Mucosa of descending colon (tissue), 3 donors: ENCODE measurements at regions of chr22 and their contacts with region 1.

Region 1: DNA sequence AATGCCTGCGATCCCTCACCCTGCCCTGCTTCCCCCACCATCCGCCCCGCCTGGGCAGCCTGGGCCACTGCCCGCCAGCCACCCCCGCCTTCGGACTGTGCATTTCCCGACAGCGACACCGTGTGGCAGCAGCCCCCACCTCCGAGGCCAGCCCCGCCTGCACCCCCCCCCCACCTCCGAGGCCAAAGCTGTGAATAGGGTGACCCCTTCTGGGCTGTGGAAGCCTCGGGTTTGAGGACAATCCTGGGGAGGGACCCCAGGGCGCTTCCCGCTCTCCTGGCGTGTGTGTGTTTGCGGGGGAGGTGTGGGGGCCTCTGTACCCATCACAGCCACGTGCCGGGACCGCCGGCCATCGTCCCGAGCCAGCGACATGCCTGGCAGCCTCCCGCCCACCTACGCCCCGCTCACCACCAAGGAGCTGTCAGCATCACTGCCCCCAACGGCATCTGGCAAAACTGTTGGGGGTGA is 33.8 kb upstream of the PPARA start:
- DNase-seq: peak; percentile 92 to 98 (median 97)
- ATAC-seq: peak; percentile 86
- H3K4me3 ChIP-seq: no peak overlapping the region
- H3K4me1 ChIP-seq: peaks cover 9% of the 10 kb centered on the region
- CTCF ChIP-seq: peak; percentile 38

Region 2: DNA sequence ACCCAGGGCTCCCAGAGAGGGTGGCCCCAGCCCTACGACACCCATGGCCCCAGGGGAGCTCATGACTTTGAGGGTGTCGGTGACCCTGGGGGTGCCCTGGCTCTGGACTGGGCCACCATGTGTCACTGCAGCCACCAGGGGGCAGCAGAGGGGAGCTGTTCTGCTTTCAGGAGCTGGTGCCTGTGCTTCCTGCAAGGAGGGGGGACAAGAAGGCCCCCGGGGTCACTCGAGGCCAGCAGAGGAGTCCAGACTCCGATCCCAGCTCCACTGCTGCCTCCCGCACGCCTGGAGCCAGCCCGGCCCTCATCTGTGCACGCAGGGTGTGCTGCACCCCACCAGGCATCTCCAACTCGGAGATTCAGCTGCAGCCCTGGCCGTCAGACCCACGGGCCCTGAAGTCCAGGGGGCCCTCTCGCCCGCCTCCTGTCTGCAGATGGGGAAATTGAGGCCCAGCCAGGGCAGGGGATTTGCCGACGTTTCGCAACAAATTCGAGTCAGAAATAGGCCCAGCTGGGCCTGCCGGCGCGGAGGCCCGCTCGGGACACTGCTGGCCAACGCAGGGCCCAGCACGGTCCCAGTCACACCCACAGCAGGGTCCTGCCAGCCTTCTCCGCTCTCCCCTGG is 110.0 kb before region 1 on chr22:
- intact Hi-C with region 1: loop called (anchors 5 kb)
- DNase-seq: peak; percentile 92 to 95 (median 93)
- ATAC-seq: peak; percentile 86
- H3K4me3 ChIP-seq: no peak overlapping the region
- H3K4me1 ChIP-seq: peaks cover 11% of the 10 kb centered on the region
- CTCF ChIP-seq: peak; percentile 92

Region 3: GRCh38 chr22:46150034-46150654 is 33.6 kb after region 1 on chr22 and contains the start of gene PPARA:
- intact Hi-C with region 1: no loop called
- DNase-seq: peak; percentile 95 to 98 (median 96)
- ATAC-seq: peak; percentile 87
- H3K4me3 ChIP-seq: peak within 1 kb of the TSS; percentile 83
- H3K4me1 ChIP-seq: peaks cover 16% of the 10 kb centered on the region
- CTCF ChIP-seq: no peak
- total RNA-seq, gene PPARA: 57.9 to 81.4 (median 58.5) TPM

Region 4: GRCh38 chr22:46619830-46620501 is 503.4 kb after region 1 on chr22 and contains the start of gene GRAMD4:
- intact Hi-C with region 1: no loop called
- DNase-seq: peak in 1 of 3 donors; percentile 57
- ATAC-seq: peak; percentile 11
- H3K4me3 ChIP-seq: no peak within 1 kb of the TSS
- H3K4me1 ChIP-seq: peaks cover 7% of the 10 kb centered on the region
- CTCF ChIP-seq: no peak
- total RNA-seq, gene GRAMD4: 114 to 203 (median 197) TPM